Ascending aorta (tissue), 2 donors: ENCODE measurements at regions of chr6 and their contacts with region 1.

Region 1: DNA sequence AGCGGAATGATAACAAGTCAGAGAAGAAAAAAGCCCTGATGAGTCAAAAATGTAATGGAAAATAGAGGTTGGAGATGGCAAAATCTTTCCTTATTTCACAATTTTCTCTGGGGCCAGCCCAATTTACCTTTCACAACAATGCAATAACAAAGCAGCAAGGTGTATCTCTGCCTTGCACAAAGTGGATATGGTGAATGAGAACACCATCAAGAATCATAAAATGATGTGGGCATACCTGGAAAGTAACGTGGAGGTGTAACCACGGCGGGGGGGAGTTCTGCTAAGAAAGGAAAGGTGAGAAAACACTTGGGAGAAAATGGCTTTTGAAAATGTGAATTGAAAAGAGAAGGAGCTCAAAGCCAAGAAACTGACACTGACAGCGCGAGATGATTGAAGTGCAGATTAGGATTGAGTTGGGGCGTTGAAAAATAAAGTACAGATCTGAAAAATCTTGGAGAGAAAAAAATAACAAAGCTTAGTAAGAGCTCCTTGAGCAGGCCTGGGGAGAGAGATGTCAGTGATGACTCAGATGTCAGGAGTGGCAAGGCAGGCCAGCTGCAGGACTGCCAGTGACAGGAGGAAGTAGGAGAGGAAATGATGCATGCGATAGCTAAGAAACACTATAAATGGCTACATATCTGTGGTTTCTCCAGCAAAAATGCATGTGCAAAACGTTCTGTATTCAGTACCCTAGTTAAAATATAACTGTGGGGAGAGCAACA is 26.2 kb downstream of the ARHGAP18 start:
- DNase-seq: peak; percentile 75 to 88
- H3K4me3 ChIP-seq: no peak overlapping the region
- H3K27ac ChIP-seq: peak overlapping the region; percentile 81 to 86
- H3K4me1 ChIP-seq: peaks cover 11 to 12% of the 10 kb centered on the region in 2 donors
- H3K27me3 ChIP-seq: no peaks in the 10 kb centered on the region
- CTCF ChIP-seq: no peak

Region 2: DNA sequence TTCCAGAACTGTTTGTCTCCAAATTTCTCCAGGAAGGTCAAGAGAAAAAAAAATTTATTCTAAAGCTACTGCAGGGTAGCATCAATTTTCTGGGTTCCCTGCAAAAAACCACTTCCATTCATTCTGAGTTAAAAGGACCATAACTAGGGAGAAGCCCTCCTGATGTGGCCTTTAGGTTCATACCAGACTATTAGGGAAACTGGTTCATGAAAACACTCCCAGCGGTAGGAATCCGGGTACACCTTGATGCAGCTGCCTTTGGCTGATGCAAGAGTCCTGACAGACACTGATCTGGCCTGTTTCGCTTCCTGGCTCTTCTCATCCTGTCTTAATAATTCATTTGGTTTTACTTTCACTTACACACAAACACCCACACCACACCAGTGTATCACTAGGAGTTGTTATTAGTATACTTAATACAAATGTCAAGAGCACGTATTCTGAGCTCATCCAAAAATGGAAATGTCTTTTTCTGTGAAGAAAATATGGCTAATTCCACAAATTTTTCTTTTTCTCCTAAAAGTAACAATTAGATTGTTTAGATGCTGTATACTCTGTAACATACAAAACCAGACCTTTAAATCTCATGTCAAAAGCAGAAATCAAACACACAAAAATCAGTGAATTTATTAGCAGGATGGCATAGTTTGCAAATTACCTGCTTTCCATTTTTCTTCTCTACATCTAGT is 64.6 kb after region 1 on chr6:
- intact Hi-C with region 1: loop called (anchors 5 kb)
- DNase-seq: no peak
- H3K4me3 ChIP-seq: no peak overlapping the region
- H3K27ac ChIP-seq: no peak overlapping the region
- H3K4me1 ChIP-seq: peaks cover 0 to 15% of the 10 kb centered on the region in 2 donors
- H3K27me3 ChIP-seq: no peaks in the 10 kb centered on the region
- CTCF ChIP-seq: no peak

Region 3: DNA sequence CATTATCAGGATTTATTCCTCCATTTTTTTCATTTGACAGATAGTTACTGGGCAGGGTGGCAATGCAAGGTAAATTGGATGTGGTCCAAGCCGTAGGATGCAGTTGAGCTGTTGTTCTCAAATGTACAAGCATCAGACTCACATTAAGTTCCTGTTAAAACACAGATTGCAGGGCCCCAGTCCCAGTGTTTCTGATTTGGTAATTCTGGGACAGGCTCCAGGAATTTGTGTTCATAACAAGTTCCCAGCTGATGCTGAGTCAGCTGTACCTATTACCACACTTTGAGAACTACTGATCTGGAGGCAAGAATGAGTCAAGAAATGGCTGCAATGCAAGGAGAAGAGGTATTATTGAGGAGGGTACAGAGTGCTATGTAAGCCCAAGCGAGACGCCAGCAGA is 165.7 kb after region 1 on chr6:
- intact Hi-C with region 1: no loop called
- DNase-seq: no peak
- H3K4me3 ChIP-seq: no peak overlapping the region
- H3K27ac ChIP-seq: no peak overlapping the region
- H3K4me1 ChIP-seq: no peaks in the 10 kb centered on the region
- H3K27me3 ChIP-seq: no peaks in the 10 kb centered on the region
- CTCF ChIP-seq: no peak